ENCODE measurements at regions of chr1 and their contacts with region 1.

Region 1: DNA sequence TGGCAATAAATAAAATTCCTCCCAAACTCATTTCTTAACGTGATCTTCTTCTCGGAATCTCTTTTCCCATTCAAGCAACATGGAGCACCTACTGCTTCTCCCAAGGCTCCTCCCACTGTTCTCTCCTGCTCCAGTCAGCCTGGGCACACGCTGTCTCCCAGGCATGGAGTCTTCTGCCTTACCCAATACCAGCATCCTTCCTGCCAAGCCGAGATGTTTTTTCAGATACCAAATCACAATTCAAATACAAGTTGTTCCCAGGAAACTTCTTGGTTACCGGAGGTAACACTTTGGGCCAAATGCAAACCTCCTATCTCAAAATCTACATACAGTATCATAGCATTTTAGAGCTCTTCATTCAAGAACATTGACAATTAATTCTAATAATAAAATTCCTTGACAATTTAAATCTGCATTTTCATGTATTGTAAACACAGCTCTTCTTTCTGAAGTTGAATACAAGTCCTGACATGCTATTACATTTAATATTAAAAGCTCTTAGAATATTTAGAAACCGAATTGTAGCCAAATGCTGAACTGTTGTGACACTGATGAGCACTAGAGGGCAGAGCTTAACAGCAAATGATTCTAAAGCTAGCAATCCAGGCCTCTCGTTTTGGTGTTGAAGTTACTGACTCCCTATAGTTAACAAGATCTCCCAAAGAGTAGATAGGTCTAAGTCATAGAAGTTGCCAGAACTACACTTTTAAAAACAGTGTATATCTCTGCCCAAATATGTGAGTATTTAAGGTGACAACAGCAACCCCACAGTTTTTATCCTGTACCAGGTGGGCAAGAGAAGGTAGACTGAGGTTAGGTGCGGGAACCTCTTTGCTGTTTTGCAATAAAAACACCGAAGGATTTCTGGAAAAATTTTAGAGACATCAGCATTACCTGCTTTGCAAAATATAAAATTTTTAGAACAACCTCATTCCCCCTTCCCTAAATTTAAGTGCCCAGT is 52.3 kb downstream of the BCAR3 start:
- DNase-seq: peak; percentile 57
- ATAC-seq: peak; percentile 77
- H3K4me3 Mint-ChIP-seq: no peak overlapping the region
- H3K27ac Mint-ChIP-seq: no peak overlapping the region
- H3K4me1 Mint-ChIP-seq: no peaks in the 10 kb centered on the region
- H3K27me3 Mint-ChIP-seq: no peaks in the 10 kb centered on the region
- CTCF ChIP-seq: peak; percentile 90

Region 2: DNA sequence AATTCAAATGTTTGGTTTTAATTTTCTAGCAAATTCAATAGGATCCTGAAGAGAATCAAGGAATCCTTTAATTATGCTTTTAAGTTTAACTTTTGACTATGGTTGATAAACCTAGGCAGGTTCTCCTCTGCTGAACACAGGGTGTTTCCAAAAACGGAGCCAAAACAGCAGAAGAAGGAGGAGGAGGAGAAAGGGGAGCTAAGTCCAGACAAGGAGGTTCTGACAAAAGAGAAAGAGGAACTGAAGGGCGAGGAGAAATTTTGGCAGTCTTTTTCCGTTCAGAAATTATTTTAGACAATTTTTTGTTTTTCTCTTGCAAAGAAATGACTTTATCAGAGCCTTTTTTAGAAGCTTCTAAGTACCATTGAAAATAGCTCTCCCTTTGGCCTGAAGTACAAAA is 214.6 kb before region 1 on chr1:
- CTCF ChIA-PET with region 1: no interaction called
- POLR2A ChIA-PET with region 1: no interaction called
- intact Hi-C with region 1: no loop called
- DNase-seq: no peak
- ATAC-seq: no peak
- H3K4me3 Mint-ChIP-seq: no peak overlapping the region
- H3K27ac Mint-ChIP-seq: no peak overlapping the region
- H3K4me1 Mint-ChIP-seq: no peaks in the 10 kb centered on the region
- H3K27me3 Mint-ChIP-seq: peaks cover 9% of the 10 kb centered on the region
- CTCF ChIP-seq: no peak

Region 3: DNA sequence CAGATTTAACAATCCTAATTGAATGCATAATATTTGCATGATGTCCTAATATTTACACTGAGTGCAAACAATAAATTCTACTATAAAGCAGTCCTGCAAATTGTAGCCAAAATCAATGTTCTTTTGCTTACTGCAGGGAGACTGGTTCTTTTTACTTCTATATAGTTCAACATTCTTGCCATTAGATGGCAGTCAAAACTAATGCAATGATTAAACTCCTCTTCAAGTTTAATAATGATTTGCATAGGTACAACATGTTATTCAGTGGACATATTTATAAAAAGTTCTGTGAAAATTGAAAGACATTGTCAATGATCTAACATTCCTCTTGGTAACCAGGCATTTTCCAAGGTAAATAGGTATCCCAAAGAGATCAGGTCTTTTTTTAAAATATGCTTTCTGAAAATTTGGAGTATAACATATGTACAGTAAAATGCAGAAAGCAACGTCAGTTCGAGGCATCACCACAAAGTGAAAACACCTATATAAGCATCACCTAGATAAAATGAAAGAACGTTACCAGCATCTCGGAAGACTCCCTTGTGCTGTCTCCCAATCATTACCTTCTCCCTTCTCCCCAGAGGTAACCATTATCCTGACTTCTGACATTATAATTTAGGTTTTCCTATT is 191.3 kb before region 1 on chr1:
- CTCF ChIA-PET with region 1: interaction called, 6 read pairs
- POLR2A ChIA-PET with region 1: no interaction called
- intact Hi-C with region 1: loop called (anchors 5 kb)
- DNase-seq: no peak
- ATAC-seq: peak; percentile 27
- H3K4me3 Mint-ChIP-seq: no peak overlapping the region
- H3K27ac Mint-ChIP-seq: no peak overlapping the region
- H3K4me1 Mint-ChIP-seq: no peaks in the 10 kb centered on the region
- H3K27me3 Mint-ChIP-seq: peaks cover 6% of the 10 kb centered on the region
- CTCF ChIP-seq: peak; percentile 66

Region 4: DNA sequence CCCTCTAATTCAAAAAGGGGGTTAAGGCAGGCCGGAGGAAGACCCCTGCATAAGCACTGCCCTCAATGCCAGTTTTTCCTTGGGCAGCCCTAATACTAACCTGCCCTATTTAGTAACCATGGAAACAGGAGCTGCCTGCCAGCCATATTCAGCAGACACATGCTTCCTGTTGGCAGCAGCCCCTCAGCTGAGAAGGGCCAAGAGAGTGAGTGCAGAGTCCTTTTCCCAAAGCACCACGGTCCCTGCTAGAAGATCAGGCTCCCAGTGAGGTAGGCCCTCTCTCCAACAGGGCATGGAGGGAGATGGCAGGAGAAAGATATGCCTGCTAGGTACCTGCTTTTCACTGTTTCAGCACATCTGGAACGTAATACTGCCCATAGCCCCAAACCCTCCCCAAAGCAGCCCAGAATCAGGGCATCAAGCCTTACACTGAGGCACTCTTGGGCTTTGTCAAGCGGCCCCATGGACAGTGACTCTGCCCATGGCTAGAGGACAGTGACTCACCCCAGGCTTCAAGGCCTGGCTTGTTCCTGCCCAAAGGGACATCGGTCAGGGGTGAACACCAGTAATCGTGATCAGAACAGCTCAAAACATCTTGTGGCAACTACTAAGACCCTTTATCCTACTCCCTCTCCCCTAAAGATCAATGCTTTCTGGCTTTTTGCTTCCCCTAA is 12.2 kb before region 1 on chr1:
- CTCF ChIA-PET with region 1: interaction called, 52 read pairs
- POLR2A ChIA-PET with region 1: interaction called, 3 read pairs
- intact Hi-C with region 1: no loop called
- DNase-seq: no peak
- ATAC-seq: no peak
- H3K4me3 Mint-ChIP-seq: no peak overlapping the region
- H3K27ac Mint-ChIP-seq: no peak overlapping the region
- H3K4me1 Mint-ChIP-seq: peaks cover 20% of the 10 kb centered on the region
- H3K27me3 Mint-ChIP-seq: no peaks in the 10 kb centered on the region
- CTCF ChIP-seq: no peak

Region 5: GRCh38 chr1:93827633-93828366 is 198.4 kb after region 1 on chr1:
- CTCF ChIA-PET with region 1: interaction called, 12 read pairs
- POLR2A ChIA-PET with region 1: interaction called, 3 read pairs
- intact Hi-C with region 1: no loop called
- DNase-seq: no peak
- ATAC-seq: no peak
- H3K4me3 Mint-ChIP-seq: no peak overlapping the region
- H3K27ac Mint-ChIP-seq: no peak overlapping the region
- H3K4me1 Mint-ChIP-seq: no peaks in the 10 kb centered on the region
- H3K27me3 Mint-ChIP-seq: no peaks in the 10 kb centered on the region
- CTCF ChIP-seq: no peak

Region 6: DNA sequence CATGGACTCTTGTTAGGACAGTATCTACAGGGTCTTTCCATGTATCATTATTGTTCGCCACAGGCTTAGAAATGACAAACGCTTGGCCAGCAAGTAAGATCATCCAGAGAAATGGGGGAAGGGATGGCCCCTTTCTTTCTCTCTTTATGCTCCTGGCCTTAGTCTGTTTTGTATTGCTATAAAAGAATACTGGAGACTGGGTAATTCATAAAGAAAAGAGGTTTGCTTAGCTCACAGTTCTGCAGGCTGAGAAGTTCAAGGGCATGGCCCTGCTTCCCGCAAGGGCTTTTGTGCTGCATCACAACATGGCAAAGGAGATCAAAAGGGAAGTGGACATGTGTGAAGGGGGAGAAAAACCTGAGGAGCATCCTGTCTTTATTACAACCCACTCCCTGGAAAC is 208.6 kb after region 1 on chr1:
- CTCF ChIA-PET with region 1: interaction called, 114 read pairs
- POLR2A ChIA-PET with region 1: no interaction called
- intact Hi-C with region 1: loop called (anchors 5 kb)
- DNase-seq: no peak
- ATAC-seq: no peak
- H3K4me3 Mint-ChIP-seq: no peak overlapping the region
- H3K27ac Mint-ChIP-seq: no peak overlapping the region
- H3K4me1 Mint-ChIP-seq: no peaks in the 10 kb centered on the region
- H3K27me3 Mint-ChIP-seq: no peaks in the 10 kb centered on the region
- CTCF ChIP-seq: no peak

Region 7: DNA sequence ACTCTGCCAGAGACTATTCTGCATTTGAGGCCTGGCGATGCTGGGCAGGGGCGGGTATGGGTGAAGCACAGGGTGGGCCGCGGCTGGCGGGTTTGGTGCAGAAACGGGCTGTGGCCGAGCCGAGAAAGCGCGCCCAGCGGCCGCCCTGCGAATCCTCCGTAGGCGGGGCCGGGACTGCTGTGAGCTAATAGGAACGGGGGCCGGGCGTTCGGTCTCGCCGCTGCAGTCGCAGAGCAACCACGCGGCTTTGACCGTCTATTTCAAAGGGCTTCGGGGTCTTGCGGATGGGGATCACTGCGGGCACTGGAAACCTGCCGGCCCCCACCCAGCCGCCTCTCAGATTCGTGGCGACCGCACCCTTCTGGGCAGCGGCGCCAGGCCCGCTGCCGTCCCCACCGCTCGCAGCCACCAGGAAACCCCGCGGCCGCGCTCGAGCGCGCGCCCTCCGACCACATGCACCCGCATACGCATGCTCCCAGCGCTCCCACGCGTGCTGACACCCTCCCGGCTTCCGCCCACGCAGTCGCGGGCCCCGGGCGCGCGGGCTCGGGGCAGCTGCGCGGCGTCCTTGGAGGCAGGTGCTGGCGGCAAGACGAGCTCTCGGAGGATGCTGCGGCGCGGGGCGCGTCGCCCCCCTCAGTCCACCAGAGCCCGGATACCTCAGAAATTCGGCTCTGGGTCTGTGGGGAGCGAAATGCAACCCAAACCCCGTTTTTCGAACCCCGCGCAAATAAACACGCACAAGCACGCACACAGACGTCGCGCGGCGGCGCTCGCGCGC is 217.0 kb after region 1 on chr1:
- CTCF ChIA-PET with region 1: interaction called, 114 read pairs
- POLR2A ChIA-PET with region 1: no interaction called
- intact Hi-C with region 1: loop called (anchors 5 kb)
- DNase-seq: peak; percentile 88
- ATAC-seq: peak; percentile 45
- H3K4me3 Mint-ChIP-seq: peak overlapping the region; percentile 80
- H3K27ac Mint-ChIP-seq: peak overlapping the region; percentile 92
- H3K4me1 Mint-ChIP-seq: peaks cover 18% of the 10 kb centered on the region
- H3K27me3 Mint-ChIP-seq: peaks cover 1% of the 10 kb centered on the region
- CTCF ChIP-seq: no peak